Activated CD4-positive, alpha-beta memory T cell treated with anti-CD3 and anti-CD28 coated beads for 36 hours (primary cell): ENCODE measurements at regions of chr6 and their contacts with region 1.

Region 1: DNA sequence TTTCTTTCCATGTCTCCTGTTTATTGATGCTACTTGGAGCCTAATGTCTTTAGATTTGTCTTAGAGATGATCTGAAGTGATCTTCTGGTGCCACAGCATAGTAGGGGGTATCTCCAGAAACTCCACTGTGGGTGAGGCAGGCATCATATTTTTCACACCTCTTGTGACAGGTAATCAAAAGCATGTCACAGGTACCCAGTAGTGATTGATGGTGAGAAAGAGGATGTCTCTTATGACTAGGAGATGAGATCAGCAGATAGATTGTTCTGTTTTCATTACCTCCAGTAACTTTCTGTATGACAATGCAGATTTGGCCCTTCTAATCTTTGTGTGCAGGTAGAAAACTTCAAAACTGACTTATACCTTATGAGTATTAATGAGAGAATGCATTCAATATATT is 13.5 kb downstream of the NCOA7 start:
- DNase-seq: peak; percentile 58
- H3K4me3 Mint-ChIP-seq: no peak overlapping the region
- H3K27ac Mint-ChIP-seq: peak overlapping the region; percentile 9
- H3K4me1 Mint-ChIP-seq: peaks cover 66% of the 10 kb centered on the region
- H3K27me3 Mint-ChIP-seq: peaks cover 2% of the 10 kb centered on the region

Region 2: DNA sequence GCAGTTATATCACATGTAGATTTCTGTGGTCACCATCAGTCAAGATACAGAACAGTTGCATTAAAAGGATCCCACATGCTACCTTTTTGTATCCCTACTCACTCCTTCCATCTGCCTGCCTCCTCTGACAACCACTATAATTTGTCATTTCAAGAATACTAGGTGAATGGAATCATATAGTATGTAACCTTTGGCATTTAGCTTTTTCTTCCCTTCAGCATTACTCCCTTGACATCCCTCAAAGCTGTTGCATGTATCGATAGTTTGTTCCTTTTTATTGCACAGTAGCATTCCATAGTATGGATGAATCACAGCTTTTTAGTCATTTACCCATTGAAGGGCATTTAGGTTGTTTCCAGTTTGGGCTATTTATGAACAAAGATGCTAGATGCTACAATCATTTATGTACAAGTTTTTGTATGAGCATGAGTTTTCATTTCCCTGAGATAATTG is 12.6 kb after region 1 on chr6:
- CTCF ChIA-PET with region 1: no interaction called
- POLR2A ChIA-PET with region 1: interaction called, 3 read pairs
- intact Hi-C with region 1: loop called (anchors 1 kb)
- DNase-seq: no peak
- H3K4me3 Mint-ChIP-seq: no peak overlapping the region
- H3K27ac Mint-ChIP-seq: no peak overlapping the region
- H3K4me1 Mint-ChIP-seq: peaks cover 67% of the 10 kb centered on the region
- H3K27me3 Mint-ChIP-seq: no peaks in the 10 kb centered on the region

Region 3: DNA sequence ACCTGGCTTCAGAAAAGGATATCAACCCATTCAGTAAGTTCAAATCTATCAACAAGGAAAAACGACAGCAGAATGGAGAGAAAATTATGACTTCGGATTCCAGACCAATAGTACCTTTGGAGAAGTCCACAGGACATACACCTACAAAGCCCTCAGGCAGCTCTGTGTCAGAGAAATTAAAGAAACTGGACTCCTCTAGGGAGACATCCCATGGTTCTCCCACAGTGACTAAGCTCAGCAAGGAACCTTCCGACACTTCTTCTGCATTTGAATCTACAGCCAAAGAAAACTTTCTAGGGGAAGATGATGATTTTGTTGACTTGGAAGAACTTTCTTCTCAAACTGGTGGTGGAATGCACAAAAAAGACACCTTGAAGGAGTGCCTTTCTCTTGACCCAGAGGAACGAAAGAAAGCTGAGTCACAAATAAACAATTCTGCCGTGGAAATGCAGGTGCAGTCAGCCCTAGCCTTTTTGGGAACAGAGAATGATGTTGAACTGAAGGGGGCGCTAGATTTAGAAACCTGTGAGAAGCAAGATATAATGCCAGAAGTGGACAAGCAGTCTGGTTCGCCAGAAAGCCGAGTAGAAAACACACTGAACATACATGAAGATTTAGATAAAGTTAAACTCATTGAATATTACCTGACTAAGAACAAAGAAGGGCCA is 84.9 kb after region 1 on chr6:
- CTCF ChIA-PET with region 1: no interaction called
- POLR2A ChIA-PET with region 1: no interaction called
- intact Hi-C with region 1: no loop called
- DNase-seq: peak; percentile 26
- H3K4me3 Mint-ChIP-seq: no peak overlapping the region
- H3K27ac Mint-ChIP-seq: no peak overlapping the region
- H3K4me1 Mint-ChIP-seq: no peaks in the 10 kb centered on the region
- H3K27me3 Mint-ChIP-seq: no peaks in the 10 kb centered on the region

Region 4: DNA sequence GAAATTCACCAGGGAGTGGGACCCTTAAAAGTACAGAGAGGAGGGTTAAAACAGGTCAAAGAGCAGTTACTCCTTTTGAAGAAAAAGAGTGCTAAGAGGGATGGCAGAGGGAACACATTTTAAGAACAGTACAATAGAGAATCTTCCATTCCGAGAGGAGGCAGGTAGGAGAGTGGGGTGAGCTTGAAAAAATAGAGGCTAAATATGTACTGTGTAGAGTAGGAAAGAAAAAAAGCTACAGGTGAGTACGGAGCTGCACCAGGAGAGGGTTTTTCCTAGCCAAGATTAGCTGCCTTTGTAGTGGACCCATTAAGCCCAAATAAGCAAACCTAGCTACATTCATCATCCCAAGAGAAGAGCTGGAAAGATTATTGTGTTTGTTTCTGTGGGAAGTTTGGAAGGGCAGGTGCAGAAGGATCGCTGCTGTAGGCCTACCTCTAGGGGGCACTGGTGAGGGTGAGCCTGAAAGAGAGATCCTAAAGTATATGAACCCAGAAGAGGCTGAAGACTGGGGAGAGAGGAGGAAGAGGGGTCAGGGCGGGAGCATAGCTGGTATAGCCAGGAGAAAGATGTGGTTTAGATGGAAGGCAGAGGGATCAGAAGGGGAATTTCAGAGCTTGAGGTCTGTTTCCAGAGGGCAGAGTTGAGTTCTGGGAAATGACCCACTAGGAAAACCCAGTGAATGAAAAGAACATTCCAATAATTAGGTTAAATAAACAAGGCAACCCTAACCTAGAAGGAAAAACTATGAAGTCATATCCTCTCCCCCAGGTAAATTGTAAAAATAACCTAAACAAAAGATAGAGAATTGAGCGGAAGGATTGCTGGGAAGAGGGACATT is 102.1 kb after region 1 on chr6:
- CTCF ChIA-PET with region 1: no interaction called
- POLR2A ChIA-PET with region 1: interaction called, 3 read pairs
- intact Hi-C with region 1: loop called (anchors 1 kb)
- DNase-seq: peak; percentile 63
- H3K4me3 Mint-ChIP-seq: no peak overlapping the region
- H3K27ac Mint-ChIP-seq: peak overlapping the region; percentile 26
- H3K4me1 Mint-ChIP-seq: peaks cover 47% of the 10 kb centered on the region
- H3K27me3 Mint-ChIP-seq: no peaks in the 10 kb centered on the region